Left colon (tissue), 2 donors: ENCODE measurements at regions of chr7 and their contacts with region 1.

Region 1: DNA sequence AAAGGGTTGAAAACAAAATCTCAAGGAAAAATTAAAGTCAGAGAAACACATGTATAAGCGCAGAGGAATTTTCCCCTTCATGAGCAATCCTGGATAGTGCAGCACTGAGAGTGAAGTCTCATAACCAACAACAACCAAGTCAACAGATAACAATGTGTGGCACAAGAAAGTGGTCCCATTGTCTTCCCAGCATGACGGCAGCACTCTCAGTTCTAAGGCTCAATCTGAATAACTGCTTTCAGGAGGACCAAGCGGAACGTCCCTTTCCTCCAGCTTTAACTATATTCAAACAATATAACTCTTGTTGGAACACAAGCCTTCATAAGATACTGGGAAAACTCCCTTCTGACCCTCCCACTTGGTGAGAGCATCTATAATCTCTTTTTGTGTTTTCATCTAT is 137.9 kb downstream of the RAPGEF5 start:
- DNase-seq: no peak
- ATAC-seq: no peak

Region 2: GRCh38 chr7:22154143-22154529 is 64.9 kb before region 1 on chr7:
- intact Hi-C with region 1: loop called in 1 of 2 experiments (anchors 5 kb)
- DNase-seq: no peak
- ATAC-seq: no peak

Region 3: DNA sequence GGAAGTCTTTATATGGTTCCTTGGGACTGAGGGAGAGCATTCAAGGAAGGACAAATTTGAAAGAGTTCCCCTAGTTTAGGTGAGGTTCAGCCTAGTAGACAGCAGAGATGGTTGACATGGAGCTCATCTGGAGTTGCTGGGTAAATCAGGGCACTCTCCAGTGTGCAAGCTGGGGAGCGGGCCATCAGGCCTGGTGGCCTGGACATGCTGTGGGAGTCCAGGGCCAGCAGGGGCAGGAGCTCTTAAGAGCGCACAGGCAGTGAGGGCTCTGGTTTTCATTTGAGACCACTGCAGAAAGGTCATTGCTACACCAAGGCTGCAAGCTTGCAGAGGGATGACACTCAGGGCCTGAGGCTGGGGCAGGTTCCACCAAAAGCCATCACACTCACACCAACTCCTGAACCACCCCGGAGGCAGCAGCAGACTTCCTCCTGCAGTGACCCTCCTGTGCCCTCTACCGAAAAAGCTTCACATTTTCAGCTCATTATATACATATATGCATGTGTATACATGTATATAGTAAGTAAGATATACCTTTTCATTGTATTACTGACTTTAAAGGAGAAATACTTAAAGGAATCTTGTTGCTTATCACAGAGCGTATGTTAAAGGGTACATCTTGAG is 241.4 kb after region 1 on chr7:
- intact Hi-C with region 1: no loop called
- DNase-seq: no peak
- ATAC-seq: no peak